ENCODE measurements at regions of chr10 and their contacts with region 1.

Region 1: DNA sequence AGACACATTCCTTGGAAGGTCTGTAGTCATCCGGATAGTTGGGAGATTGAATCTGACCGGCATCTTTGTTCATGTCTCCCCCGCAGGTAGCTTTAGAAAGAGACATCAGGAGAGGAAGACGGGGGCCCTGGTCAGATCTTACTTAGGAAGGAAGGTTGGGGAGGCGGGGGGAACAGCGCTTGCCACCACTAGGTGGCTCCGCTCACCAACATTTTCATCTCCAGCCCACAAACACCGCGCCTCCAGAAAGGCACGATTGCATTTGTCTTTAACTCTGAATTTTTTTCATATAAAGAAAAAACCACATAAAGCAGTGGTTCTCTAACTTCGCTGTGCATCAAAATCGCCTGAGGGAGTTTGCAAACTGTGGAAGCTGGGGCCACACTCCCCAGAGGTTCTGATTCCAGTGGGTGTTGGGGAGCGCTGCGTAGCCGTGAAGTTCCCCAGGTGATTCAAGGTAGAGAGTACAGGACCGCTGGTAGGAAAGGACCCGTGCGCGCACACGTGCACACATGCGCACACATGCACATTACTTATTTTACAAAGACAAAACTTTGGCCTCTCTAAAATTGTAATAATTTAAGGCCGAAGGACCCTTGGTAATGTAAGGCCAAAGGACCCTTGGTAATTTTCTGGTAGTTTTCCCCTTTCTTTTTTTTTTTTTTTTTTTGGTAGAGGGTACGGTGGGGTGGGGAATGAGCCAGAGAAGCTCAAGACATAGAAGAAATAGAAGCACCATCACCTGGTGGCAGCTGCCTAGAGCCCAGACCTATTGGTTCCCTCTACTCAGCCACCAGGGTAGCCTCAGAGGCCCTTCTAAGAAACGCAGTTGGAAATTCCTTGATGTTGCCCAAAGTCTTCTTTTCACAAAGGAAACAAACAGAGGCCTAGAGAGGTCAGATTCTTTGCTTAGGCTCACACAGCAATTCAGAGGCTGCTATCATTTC is 37.4 kb upstream of the OPALIN start:
- DNase-seq: peak; percentile 53 to 96 (median 74)

Region 2: DNA sequence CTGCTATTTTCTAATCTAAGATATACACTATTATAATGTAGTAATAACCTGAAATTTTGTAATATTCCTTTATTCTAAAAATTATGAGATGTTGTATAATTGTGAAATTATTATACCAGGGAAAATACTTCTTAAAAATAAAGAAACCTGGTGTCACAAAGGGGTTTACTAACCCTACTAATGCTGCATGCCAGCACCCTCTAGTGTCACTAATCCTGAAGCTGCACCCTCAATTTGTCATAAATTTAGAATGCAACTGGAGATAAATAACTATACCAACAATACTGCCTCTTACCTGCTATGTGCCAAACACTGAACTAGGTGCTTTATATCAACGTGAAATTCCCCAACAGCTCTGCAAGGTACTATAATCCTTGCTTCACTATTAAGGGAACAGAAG is 159.8 kb after region 1 on chr10:
- intact Hi-C with region 1: loop called (anchors 5 kb)
- DNase-seq: peak in 2 of 10 donors; percentile 5 to 26

Measured in posterior cingulate gyrus (tissue), 11 donors.